Mammary epithelial cell (primary cell): ENCODE measurements at regions of chr16 and their contacts with region 1.

Region 1: GRCh38 chr16:610513-611334 is 20.1 kb upstream of the WFIKKN1 start:
- DNase-seq: peak; percentile 83
- H3K4me3 ChIP-seq: no peak overlapping the region
- H3K27ac ChIP-seq: peak overlapping the region; percentile 33
- H3K4me1 ChIP-seq: peaks cover 12% of the 10 kb centered on the region
- H3K27me3 ChIP-seq: no peaks in the 10 kb centered on the region
- CTCF ChIP-seq: peak; percentile 84 to 97

Region 2: GRCh38 chr16:401468-402348 is 209.0 kb before region 1 on chr16 and contains the start of gene DECR2:
- CTCF ChIA-PET with region 1: no interaction called
- dilution Hi-C with region 1: no loop called
- in situ Hi-C with region 1: no loop called
- intact Hi-C with region 1: no loop called
- DNase-seq: peak; percentile 79
- H3K4me3 ChIP-seq: peak within 1 kb of the TSS; percentile 77 to 88 (median 80)
- H3K27ac ChIP-seq: peak within 1 kb of the TSS; percentile 38
- H3K4me1 ChIP-seq: peaks cover 6% of the 10 kb centered on the region
- H3K27me3 ChIP-seq: no peaks in the 10 kb centered on the region
- CTCF ChIP-seq: peak; percentile 7 to 58
- total RNA-seq, gene DECR2: 19.2 to 26.6 TPM

Region 3: DNA sequence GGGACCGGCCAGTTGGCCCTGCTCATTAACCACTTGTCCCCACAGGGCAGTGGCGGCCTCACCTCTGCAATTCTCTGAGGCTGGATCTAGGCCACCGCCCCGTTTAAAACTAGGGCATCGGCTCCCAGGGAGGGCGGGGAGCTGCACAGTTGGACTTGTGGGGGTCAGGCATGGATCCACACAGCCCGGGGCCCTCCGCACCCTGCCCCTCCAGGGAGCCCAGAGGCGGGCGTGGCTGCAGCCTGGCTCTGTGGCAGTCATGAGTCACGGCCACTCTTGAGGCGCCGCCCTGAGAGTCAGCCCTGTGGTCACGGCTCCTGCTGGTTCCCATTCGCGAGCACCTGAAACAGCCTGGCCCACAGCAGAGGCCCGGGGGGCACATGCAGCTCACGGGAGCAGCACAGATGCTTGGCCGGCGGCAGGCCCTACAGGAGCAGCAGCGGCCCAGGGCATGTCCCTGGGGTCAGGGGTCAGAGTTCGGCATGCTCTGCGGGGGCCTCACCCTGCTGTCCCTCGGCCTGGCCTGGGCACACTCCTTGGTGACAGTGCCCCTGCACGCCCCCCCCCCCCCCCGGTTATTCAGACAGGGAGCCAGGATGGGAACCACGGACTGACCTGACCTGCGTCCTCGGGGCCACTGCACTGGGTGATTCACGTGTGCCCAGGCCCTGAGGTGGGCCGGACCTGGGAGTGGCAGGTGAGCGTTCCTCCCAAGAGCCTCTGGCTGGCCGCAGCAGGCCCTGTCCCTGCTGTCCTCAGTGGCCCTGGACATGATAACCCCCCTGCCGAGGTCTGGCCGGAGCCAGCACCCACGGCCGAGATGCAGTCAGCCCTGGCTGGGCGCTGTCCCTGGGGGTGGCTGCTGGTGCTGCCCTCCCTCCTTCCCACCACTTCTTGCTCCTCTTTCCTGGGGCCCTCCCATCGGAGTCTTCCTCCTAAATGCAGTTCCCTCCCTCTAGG is 75.0 kb before region 1 on chr16:
- CTCF ChIA-PET with region 1: no interaction called
- dilution Hi-C with region 1: no loop called
- in situ Hi-C with region 1: no loop called
- intact Hi-C with region 1: loop called (anchors 2 kb)
- DNase-seq: peak; percentile 81
- H3K4me3 ChIP-seq: no peak overlapping the region
- H3K27ac ChIP-seq: peak overlapping the region; percentile 13
- H3K4me1 ChIP-seq: peaks cover 18% of the 10 kb centered on the region
- H3K27me3 ChIP-seq: no peaks in the 10 kb centered on the region
- CTCF ChIP-seq: no peak

Region 4: GRCh38 chr16:546909-547770 is 63.6 kb before region 1 on chr16:
- CTCF ChIA-PET with region 1: no interaction called
- dilution Hi-C with region 1: no loop called
- in situ Hi-C with region 1: no loop called
- intact Hi-C with region 1: loop called (anchors 2 kb)
- DNase-seq: peak; percentile 37
- H3K4me3 ChIP-seq: no peak overlapping the region
- H3K27ac ChIP-seq: no peak overlapping the region
- H3K4me1 ChIP-seq: peaks cover 5% of the 10 kb centered on the region
- H3K27me3 ChIP-seq: no peaks in the 10 kb centered on the region
- CTCF ChIP-seq: peak; percentile 72 to 85

Region 5: GRCh38 chr16:578870-579405 is 31.8 kb before region 1 on chr16:
- CTCF ChIA-PET with region 1: no interaction called
- dilution Hi-C with region 1: loop called (anchors 5 kb)
- in situ Hi-C with region 1: no loop called
- intact Hi-C with region 1: loop called (anchors 2 kb)
- DNase-seq: no peak
- H3K4me3 ChIP-seq: no peak overlapping the region
- H3K27ac ChIP-seq: no peak overlapping the region
- H3K4me1 ChIP-seq: no peaks in the 10 kb centered on the region
- H3K27me3 ChIP-seq: no peaks in the 10 kb centered on the region
- CTCF ChIP-seq: peak; percentile 38 to 65

Region 6: DNA sequence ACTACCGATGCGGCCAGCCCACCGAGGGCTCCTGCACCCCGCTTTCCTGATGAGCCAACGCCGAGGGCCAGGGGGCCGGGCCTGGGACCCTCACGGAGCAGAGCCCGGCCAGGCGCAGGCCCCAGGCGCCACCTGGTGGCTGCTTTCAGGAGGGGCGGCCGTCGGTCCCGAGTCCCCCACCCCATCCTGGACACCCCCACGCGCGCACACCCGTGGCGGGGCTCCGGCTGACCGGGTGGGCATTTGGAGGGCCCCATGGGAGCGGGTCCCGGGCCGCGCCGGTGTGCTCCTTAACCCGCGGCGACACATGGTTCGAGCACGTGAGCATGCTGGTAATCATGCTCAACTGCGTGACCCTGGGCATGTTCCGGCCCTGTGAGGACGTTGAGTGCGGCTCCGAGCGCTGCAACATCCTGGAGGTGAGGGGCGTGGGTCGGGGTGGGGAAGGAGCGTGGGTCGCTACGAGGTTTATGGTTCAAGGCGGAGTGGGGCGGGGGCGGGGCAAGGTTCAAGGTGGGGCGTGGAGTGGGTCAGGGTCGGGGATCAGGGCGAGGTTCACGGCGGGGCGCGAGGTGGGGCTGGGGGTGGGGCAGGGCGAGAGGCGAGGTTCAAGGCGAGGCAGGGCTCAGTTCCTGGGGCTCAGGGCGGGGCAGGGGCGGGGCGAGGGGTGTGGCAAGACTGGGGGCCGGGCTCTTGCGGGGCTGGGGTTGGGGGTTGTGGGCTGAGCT is 584.1 kb after region 1 on chr16:
- CTCF ChIA-PET with region 1: no interaction called
- dilution Hi-C with region 1: no loop called
- in situ Hi-C with region 1: no loop called
- intact Hi-C with region 1: no loop called
- DNase-seq: no peak
- H3K4me3 ChIP-seq: no peak overlapping the region
- H3K27ac ChIP-seq: no peak overlapping the region
- H3K4me1 ChIP-seq: no peaks in the 10 kb centered on the region
- H3K27me3 ChIP-seq: no peaks in the 10 kb centered on the region
- CTCF ChIP-seq: peak; percentile 25 to 73